ENCODE measurements at regions of chr7 and their contacts with region 1.

Region 1: GRCh38 chr7:156892821-156893706 is at the start of gene LMBR1:
- DNase-seq: peak; percentile 91 to 98 (median 94)
- ATAC-seq: peak; percentile 80
- H3K4me3 ChIP-seq: peak within 1 kb of the TSS; percentile 77
- H3K4me3 Mint-ChIP-seq: peak within 1 kb of the TSS; percentile 96
- H3K27ac ChIP-seq: peak within 1 kb of the TSS; percentile 73 to 83
- H3K27ac Mint-ChIP-seq: peak within 1 kb of the TSS; percentile 93
- H3K4me1 ChIP-seq: peaks cover 24% of the 10 kb centered on the region
- H3K4me1 Mint-ChIP-seq: peaks cover 54% of the 10 kb centered on the region
- H3K27me3 ChIP-seq: no peaks in the 10 kb centered on the region
- H3K27me3 Mint-ChIP-seq: no peaks in the 10 kb centered on the region
- CTCF ChIP-seq: peak; percentile 72
- total RNA-seq, gene LMBR1: 61.6 to 61.9 TPM

Region 2: GRCh38 chr7:155003376-155004214 is 1889.5 kb before region 1 on chr7:
- CTCF ChIA-PET with region 1: no interaction called
- POLR2A ChIA-PET with region 1: no interaction called
- intact Hi-C with region 1: loop called in 1 of 2 experiments (anchors 5 kb)
- DNase-seq: peak; percentile 71 to 92 (median 85)
- ATAC-seq: peak; percentile 86
- H3K4me3 ChIP-seq: peak overlapping the region; percentile 85
- H3K4me3 Mint-ChIP-seq: peak overlapping the region; percentile 97
- H3K27ac ChIP-seq: peak overlapping the region; percentile 40 to 52
- H3K27ac Mint-ChIP-seq: peak overlapping the region; percentile 88
- H3K4me1 ChIP-seq: peaks cover 16% of the 10 kb centered on the region
- H3K4me1 Mint-ChIP-seq: peaks cover 23% of the 10 kb centered on the region
- H3K27me3 ChIP-seq: no peaks in the 10 kb centered on the region
- H3K27me3 Mint-ChIP-seq: no peaks in the 10 kb centered on the region
- CTCF ChIP-seq: no peak

Region 3: GRCh38 chr7:156640257-156640948 is 252.7 kb before region 1 on chr7 and contains the start of gene RNF32:
- CTCF ChIA-PET with region 1: no interaction called
- POLR2A ChIA-PET with region 1: interaction called, 4 read pairs
- intact Hi-C with region 1: loop called in 1 of 2 experiments (anchors 10 kb)
- DNase-seq: peak; percentile 87 to 98 (median 92)
- ATAC-seq: peak; percentile 74
- H3K4me3 ChIP-seq: peak within 1 kb of the TSS; percentile 64
- H3K4me3 Mint-ChIP-seq: peak within 1 kb of the TSS; percentile 89
- H3K27ac ChIP-seq: peak within 1 kb of the TSS; percentile 53 to 78
- H3K27ac Mint-ChIP-seq: peak within 1 kb of the TSS; percentile 85
- H3K4me1 ChIP-seq: peaks cover 17% of the 10 kb centered on the region
- H3K4me1 Mint-ChIP-seq: peaks cover 18% of the 10 kb centered on the region
- H3K27me3 ChIP-seq: no peaks in the 10 kb centered on the region
- H3K27me3 Mint-ChIP-seq: peaks cover 69% of the 10 kb centered on the region
- CTCF ChIP-seq: no peak
- total RNA-seq, gene RNF32: 0.99 TPM in 1 of 2 experiments, not detected in the other

Region 4: GRCh38 chr7:156927571-156928405 is 34.7 kb after region 1 on chr7:
- CTCF ChIA-PET with region 1: interaction called, 4 read pairs
- POLR2A ChIA-PET with region 1: interaction called, 6 read pairs
- intact Hi-C with region 1: loop called in 1 of 2 experiments (anchors 1 kb)
- DNase-seq: no peak
- ATAC-seq: no peak
- H3K4me3 ChIP-seq: no peak overlapping the region
- H3K4me3 Mint-ChIP-seq: no peak overlapping the region
- H3K27ac ChIP-seq: no peak overlapping the region
- H3K27ac Mint-ChIP-seq: no peak overlapping the region
- H3K4me1 ChIP-seq: peaks cover 21% of the 10 kb centered on the region
- H3K4me1 Mint-ChIP-seq: peaks cover 23% of the 10 kb centered on the region
- H3K27me3 ChIP-seq: no peaks in the 10 kb centered on the region
- H3K27me3 Mint-ChIP-seq: no peaks in the 10 kb centered on the region
- CTCF ChIP-seq: no peak

Region 5: GRCh38 chr7:156949541-156950380 is 56.7 kb after region 1 on chr7 and contains the start of gene NOM1:
- CTCF ChIA-PET with region 1: interaction called, 24 read pairs
- POLR2A ChIA-PET with region 1: interaction called, 24 read pairs
- intact Hi-C with region 1: loop called (anchors 1 kb)
- DNase-seq: peak; percentile 85 to 96 (median 90)
- ATAC-seq: peak; percentile 94
- H3K4me3 ChIP-seq: peak within 1 kb of the TSS; percentile 89
- H3K4me3 Mint-ChIP-seq: peak within 1 kb of the TSS; percentile 97
- H3K27ac ChIP-seq: peak within 1 kb of the TSS in 1 of 2 donors; percentile 50
- H3K27ac Mint-ChIP-seq: peak within 1 kb of the TSS; percentile 82
- H3K4me1 ChIP-seq: peaks cover 30% of the 10 kb centered on the region
- H3K4me1 Mint-ChIP-seq: peaks cover 34% of the 10 kb centered on the region
- H3K27me3 ChIP-seq: peaks cover 0 to 4% of the 10 kb centered on the region in 2 experiments
- H3K27me3 Mint-ChIP-seq: peaks cover 8% of the 10 kb centered on the region
- CTCF ChIP-seq: peak; percentile 50
- total RNA-seq, gene NOM1: 25.5 to 27.6 TPM

Region 6: DNA sequence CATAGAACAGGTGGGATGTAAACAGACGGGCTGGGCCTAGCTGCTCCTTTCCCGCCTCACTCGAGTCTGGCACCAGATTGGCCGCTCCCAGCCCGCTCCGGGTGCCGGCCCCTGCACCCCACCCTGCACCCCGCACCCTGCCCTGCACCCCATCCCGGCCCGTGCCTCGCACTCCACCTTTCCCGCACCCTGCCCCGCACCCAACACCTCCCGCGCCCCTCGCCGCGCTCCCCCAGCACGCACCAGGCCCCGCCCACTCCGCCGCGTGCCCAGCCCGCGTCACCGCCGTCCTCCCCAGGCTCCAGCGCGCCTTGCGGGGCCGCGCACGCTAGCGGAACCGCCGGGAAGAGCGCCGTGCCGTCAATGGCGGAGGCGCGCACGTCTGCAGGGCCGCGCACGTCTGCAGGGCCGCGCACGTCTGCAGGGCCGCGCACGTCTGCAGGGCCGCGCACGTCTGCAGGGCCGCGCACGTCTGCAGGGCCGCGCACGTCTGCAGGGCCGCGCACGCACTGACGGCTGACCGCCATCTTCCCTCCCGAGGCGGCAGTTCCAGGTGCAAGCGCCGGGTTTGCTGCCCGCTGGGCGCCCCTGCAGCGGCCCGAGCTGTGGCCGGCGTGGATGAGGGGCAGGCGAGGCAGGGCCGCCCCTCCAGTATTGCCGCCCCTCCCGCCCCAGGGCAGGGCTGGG is 245.5 kb after region 1 on chr7 and contains the start of gene UBE3C:
- CTCF ChIA-PET with region 1: no interaction called
- POLR2A ChIA-PET with region 1: interaction called, 3 read pairs
- intact Hi-C with region 1: loop called (anchors 2 kb)
- DNase-seq: peak; percentile 79 to 97 (median 90)
- ATAC-seq: peak; percentile 81
- H3K4me3 ChIP-seq: peak within 1 kb of the TSS; percentile 78
- H3K4me3 Mint-ChIP-seq: peak within 1 kb of the TSS; percentile 92
- H3K27ac ChIP-seq: peak within 1 kb of the TSS; percentile 85 to 86
- H3K27ac Mint-ChIP-seq: peak within 1 kb of the TSS; percentile 98
- H3K4me1 ChIP-seq: peaks cover 44% of the 10 kb centered on the region
- H3K4me1 Mint-ChIP-seq: peaks cover 49% of the 10 kb centered on the region
- H3K27me3 ChIP-seq: no peaks in the 10 kb centered on the region
- H3K27me3 Mint-ChIP-seq: no peaks in the 10 kb centered on the region
- CTCF ChIP-seq: no peak
- total RNA-seq, gene UBE3C: 30.8 to 32.3 TPM